GM12878 (cell line): ENCODE measurements at regions of chr13 and their contacts with region 1.

Region 1: GRCh38 chr13:102870677-102871415 is 25.0 kb downstream of the ERCC5 start:
- DNase-seq: no peak
- ATAC-seq: peak; percentile 95
- H3K4me3 ChIP-seq: no peak overlapping the region
- H3K27ac ChIP-seq: no peak overlapping the region
- H3K4me1 ChIP-seq: no peaks in the 10 kb centered on the region
- H3K27me3 ChIP-seq: no peaks in the 10 kb centered on the region
- CTCF ChIP-seq: peak; percentile 72 to 82 (median 73)
- EP300 ChIP-seq: no peak
- POLR2A ChIP-seq: no peak
- RAD21 ChIP-seq: peak; percentile 90

Region 2: DNA sequence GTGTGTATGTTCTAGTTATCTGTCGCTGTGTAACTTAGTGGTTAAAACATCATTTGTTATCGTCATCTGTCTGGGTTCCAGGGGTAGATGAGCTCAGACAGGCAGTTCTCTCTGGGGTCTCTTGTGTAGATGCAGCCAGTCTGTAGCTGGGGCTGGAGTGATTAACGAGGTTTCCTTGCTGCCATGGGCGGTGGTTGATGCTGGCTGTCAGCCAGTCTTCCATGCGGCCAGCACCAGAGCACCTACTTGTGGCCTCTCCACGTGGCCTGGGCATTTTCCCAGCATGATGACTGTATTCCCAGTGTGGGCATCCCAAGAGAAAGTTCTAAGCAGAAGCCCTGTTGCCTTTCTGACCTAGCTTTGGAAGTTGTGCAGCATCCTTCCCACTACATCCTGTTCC is 14.3 kb before region 1 on chr13:
- CTCF ChIA-PET with region 1: interaction called, 12 read pairs
- POLR2A ChIA-PET with region 1: no interaction called
- RAD21 ChIA-PET with region 1: interaction called, 3 read pairs
- SMC1A ChIA-PET with region 1: interaction called, 6 read pairs
- in situ Hi-C with region 1: no loop called
- intact Hi-C with region 1: no loop called
- DNase-seq: no peak
- ATAC-seq: no peak
- H3K4me3 ChIP-seq: no peak overlapping the region
- H3K27ac ChIP-seq: no peak overlapping the region
- H3K4me1 ChIP-seq: peaks cover 4% of the 10 kb centered on the region; the same call in 1 of the 2 replicates
- H3K27me3 ChIP-seq: no peaks in the 10 kb centered on the region
- CTCF ChIP-seq: no peak
- EP300 ChIP-seq: no peak
- POLR2A ChIP-seq: no peak
- RAD21 ChIP-seq: no peak

Region 3: DNA sequence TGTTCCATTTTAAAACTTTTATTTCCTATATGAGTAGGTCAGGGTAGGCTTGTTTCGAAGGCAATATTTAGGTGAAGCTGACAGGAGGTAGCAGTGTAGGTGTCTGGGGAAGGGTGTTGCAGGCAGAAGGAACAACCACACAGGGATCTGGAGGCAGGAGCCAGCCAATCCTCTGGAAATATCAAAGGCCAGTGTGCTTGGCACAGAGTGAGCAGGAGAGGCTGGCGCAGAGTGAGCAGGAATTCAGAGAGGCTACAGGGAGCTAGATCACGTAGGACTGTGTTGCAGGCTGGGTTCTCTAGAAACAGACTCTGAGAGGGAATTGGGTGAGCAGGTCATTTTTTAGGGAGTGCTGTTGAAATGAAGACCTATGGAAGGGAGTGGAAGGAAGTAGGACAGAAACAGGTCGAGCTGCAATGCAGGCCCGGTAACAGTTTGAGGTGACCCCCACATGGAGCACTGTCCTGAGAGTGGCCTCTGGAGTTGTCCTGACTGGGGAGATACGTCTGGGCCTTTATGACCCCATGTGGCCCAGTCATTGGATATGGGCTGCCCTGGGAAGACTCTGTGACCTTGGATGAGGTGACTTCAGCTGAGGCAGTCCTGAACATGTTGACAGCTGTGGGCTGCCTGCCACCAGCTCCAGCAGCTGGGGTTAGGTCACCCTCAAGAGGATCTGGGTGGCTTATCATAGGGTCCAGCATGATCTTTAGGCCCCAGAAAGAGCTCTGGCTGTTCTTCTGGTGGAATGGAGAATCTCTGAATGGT is 26.7 kb after region 1 on chr13:
- CTCF ChIA-PET with region 1: interaction called, 24 read pairs
- POLR2A ChIA-PET with region 1: no interaction called
- RAD21 ChIA-PET with region 1: interaction called, 4 read pairs
- SMC1A ChIA-PET with region 1: interaction called, 5 read pairs
- in situ Hi-C with region 1: no loop called
- intact Hi-C with region 1: no loop called
- DNase-seq: no peak
- ATAC-seq: no peak; the same call in 2 of the 3 replicates
- H3K4me3 ChIP-seq: no peak overlapping the region
- H3K27ac ChIP-seq: no peak overlapping the region
- H3K4me1 ChIP-seq: no peaks in the 10 kb centered on the region
- H3K27me3 ChIP-seq: no peaks in the 10 kb centered on the region
- CTCF ChIP-seq: no peak
- EP300 ChIP-seq: no peak
- POLR2A ChIP-seq: no peak
- RAD21 ChIP-seq: no peak

Region 4: DNA sequence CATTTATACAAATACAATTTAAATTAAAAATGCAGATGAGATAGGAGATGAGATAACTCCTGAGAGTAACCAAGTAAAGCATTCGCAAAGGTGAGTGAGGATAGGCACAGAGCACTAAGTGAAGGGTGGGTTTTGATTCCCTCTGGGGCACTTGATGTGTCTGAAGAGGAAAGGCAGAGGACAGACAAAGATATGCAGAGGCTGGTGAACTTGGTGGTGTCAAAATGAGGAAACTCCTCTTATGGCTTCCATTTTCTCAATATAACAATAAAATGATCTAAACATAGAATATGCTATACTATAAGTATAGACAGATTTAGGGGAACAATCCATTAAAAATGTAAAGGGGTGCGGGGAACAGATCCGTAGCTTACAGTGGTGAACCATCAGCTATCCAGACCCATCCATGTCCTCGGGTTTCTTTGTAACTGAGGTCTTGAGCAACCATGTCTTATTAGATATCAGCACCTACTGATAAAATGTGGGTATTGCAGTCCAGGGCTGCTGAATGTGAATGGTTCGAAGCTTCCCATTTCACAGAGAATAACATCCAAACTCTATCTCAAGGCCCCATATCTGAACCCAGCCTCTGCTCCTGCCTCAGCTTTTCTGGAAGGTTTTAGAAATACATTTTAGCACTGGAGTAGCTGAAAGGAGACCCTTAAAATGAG is 269.3 kb after region 1 on chr13:
- CTCF ChIA-PET with region 1: interaction called, 10 read pairs
- POLR2A ChIA-PET with region 1: no interaction called
- RAD21 ChIA-PET with region 1: interaction called, 6 read pairs
- SMC1A ChIA-PET with region 1: interaction called, 5 read pairs
- in situ Hi-C with region 1: no loop called
- intact Hi-C with region 1: no loop called
- DNase-seq: peak; percentile 52
- ATAC-seq: peak; percentile 93
- H3K4me3 ChIP-seq: no peak overlapping the region
- H3K27ac ChIP-seq: no peak overlapping the region
- H3K4me1 ChIP-seq: no peaks in the 10 kb centered on the region
- H3K27me3 ChIP-seq: no peaks in the 10 kb centered on the region
- CTCF ChIP-seq: peak; percentile 70 to 90 (median 74)
- EP300 ChIP-seq: no peak
- POLR2A ChIP-seq: no peak
- RAD21 ChIP-seq: peak; percentile 98